Right lobe of liver (tissue), 6 donors: ENCODE measurements at regions of chr12 and their contacts with region 1.

Region 1: DNA sequence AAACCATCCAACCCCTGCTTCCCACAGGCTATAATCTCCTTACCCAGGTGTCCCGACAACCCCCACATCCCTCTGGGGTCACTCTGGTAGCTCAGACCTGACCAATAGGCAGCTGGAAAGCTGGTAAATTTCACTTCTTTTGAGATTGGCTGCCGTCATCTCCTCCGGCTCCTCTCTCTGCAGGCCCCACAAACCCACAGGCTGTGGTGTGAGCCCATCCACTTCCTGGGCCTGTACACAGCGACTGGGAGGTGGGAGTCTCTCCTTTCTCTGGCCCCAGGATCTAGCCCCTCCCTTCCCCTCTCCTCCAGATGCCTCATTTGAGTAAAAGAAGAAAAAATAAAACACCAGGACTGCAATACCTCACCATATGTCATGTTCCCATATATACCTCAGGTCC is 709 bp downstream of the INHBC start:
- DNase-seq: peak in 1 of 3 donors; percentile 45
- ATAC-seq: peak; percentile 1 to 22 (median 17)
- H3K4me3 ChIP-seq: peak overlapping the region; percentile 45 to 74 (median 48)
- H3K27ac ChIP-seq: peak overlapping the region; percentile 86 to 88 (median 88)
- H3K4me1 ChIP-seq: peaks cover 0 to 69% (median 5%) of the 10 kb centered on the region in 4 donors
- H3K27me3 ChIP-seq: no peaks in the 10 kb centered on the region
- CTCF ChIP-seq: no peak
- POLR2A ChIP-seq: peak; percentile 15

Region 2: DNA sequence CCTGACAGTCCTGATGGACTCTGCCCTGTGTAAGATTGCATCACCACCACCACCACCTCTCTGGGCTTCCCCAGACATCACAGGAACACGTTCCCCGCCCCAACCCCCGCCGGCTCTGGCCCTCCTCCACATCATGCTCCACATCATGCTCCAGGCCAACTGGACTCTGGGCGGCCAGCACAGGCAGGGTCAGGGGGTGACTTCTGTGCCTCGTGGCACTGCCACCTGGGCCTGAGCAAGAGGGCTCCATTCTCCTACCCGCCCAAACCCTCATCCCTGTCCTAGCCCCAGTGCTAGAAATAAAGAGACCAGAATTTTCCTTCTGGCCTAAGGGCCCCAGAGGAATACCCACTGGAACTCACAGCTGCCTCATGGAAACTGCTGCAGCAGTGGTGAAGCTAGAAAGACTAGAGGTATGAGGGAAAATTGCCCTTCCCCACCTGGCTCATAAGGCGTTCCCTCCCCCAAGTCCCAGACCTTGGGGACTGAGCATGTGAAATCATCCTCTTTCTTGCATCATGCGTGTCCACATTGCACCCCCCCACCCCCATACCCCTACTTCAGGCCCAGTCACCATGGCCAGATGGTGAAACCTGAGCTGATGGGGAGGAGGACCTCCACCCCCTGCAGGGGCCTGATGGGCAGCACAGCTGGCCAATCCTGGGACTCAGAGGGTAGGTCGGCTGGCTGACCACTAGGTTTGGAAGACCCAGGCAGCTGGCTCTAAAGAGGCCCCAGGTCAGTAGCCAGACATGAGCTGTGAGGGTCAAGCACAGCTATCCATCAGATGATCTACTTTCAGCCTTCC is 19.5 kb after region 1 on chr12 and contains the start of gene INHBE:
- intact Hi-C with region 1: loop called in 1 of 2 experiments (anchors 2 kb)
- DNase-seq: peak; percentile 94 to 98 (median 95)
- ATAC-seq: peak; percentile 34 to 68 (median 56)
- H3K4me3 ChIP-seq: peak within 1 kb of the TSS; percentile 64 to 77 (median 66)
- H3K27ac ChIP-seq: peak within 1 kb of the TSS; percentile 83 to 87 (median 85)
- H3K4me1 ChIP-seq: peaks cover 0 to 72% (median 21%) of the 10 kb centered on the region in 4 donors
- H3K27me3 ChIP-seq: no peaks in the 10 kb centered on the region
- CTCF ChIP-seq: peak in 2 of 4 donors; percentile 12 to 16
- POLR2A ChIP-seq: peak; percentile 94
- total RNA-seq, gene INHBE: 17.4 to 302 (median 150) TPM